Activated naive CD4-positive, alpha-beta T cell treated with anti-CD3 and anti-CD28 coated beads for 36 hours (primary cell): ENCODE measurements at regions of chr14 and their contacts with region 1.

Region 1: GRCh38 chr14:45267071-45267470 is 14.1 kb upstream of the MIS18BP1 start:
- DNase-seq: no peak
- H3K4me3 Mint-ChIP-seq: no peak overlapping the region
- H3K27ac Mint-ChIP-seq: no peak overlapping the region
- H3K4me1 Mint-ChIP-seq: no peaks in the 10 kb centered on the region
- H3K27me3 Mint-ChIP-seq: peaks cover 2% of the 10 kb centered on the region

Region 2: DNA sequence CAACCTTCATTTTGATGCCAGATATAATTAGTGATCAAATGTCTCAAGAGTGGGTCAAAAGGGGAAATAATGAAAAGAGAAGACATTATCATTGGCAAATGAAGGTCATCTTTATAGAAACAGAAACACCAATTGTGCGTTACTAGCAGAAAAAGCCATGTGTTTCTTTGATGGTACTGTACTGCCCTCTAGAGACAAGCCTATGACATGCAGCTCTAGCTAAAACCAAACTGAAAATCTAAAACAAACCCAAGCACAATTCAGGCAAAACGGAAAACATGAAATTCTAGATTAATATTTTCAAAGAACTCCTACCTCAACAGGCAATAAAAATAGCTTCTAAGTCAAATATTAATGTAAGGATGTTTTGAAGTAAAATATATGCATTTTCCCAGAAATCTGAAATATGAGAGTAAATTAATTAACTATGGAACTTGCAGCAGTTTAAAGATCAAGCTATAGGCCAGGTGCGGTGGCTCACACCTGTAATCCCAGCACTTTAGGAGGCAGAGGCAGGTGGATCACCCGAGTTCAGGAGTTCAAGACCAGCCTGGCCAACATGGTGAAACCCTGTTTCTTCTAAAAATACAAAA is 420.7 kb before region 1 on chr14:
- CTCF ChIA-PET with region 1: interaction called, 5 read pairs
- intact Hi-C with region 1: loop called (anchors 2 kb)
- DNase-seq: peak; percentile 20
- H3K4me3 Mint-ChIP-seq: no peak overlapping the region
- H3K27ac Mint-ChIP-seq: no peak overlapping the region
- H3K4me1 Mint-ChIP-seq: no peaks in the 10 kb centered on the region
- H3K27me3 Mint-ChIP-seq: peaks cover 2% of the 10 kb centered on the region

Region 3: GRCh38 chr14:44897045-44897844 is 369.8 kb before region 1 on chr14:
- CTCF ChIA-PET with region 1: no interaction called
- intact Hi-C with region 1: loop called (anchors 5 kb)
- DNase-seq: peak; percentile 99
- H3K4me3 Mint-ChIP-seq: peak overlapping the region; percentile 89
- H3K27ac Mint-ChIP-seq: peak overlapping the region; percentile 83
- H3K4me1 Mint-ChIP-seq: peaks cover 13% of the 10 kb centered on the region
- H3K27me3 Mint-ChIP-seq: no peaks in the 10 kb centered on the region

Region 4: GRCh38 chr14:44912041-44912869 is 354.8 kb before region 1 on chr14:
- CTCF ChIA-PET with region 1: interaction called, 9 read pairs
- intact Hi-C with region 1: loop called (anchors 1 kb)
- DNase-seq: no peak
- H3K4me3 Mint-ChIP-seq: no peak overlapping the region
- H3K27ac Mint-ChIP-seq: no peak overlapping the region
- H3K4me1 Mint-ChIP-seq: peaks cover 9% of the 10 kb centered on the region
- H3K27me3 Mint-ChIP-seq: peaks cover 23% of the 10 kb centered on the region

Region 5: GRCh38 chr14:45134051-45134958 is 132.8 kb before region 1 on chr14 and contains the start of gene FKBP3:
- CTCF ChIA-PET with region 1: interaction called, 7 read pairs
- intact Hi-C with region 1: loop called (anchors 1 kb)
- DNase-seq: peak; percentile 97
- H3K4me3 Mint-ChIP-seq: peak within 1 kb of the TSS; percentile 99
- H3K27ac Mint-ChIP-seq: peak within 1 kb of the TSS; percentile 98
- H3K4me1 Mint-ChIP-seq: peaks cover 37% of the 10 kb centered on the region
- H3K27me3 Mint-ChIP-seq: no peaks in the 10 kb centered on the region
- total RNA-seq, gene FKBP3: 47.6 to 50.8 TPM

Region 6: DNA sequence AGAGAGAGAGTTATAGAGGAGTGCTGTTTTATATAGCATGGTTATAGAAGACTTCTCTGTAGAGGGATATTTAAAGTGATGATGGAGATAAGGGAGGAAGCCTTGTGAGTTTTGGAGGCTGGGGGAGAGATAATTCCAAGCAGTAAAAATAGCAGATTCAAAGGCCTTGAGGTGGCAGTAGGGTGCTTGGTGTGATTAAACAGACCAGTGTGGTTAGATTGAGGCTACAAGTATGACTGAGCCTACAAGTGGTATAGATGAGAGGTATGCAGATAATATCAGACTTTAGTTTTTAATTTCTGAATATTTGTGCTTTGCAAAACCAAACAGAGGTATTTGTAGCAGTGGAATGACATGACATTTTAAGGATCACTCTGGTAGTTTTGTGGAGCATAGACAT is 111.0 kb before region 1 on chr14:
- CTCF ChIA-PET with region 1: interaction called, 3 read pairs
- intact Hi-C with region 1: loop called (anchors 5 kb)
- DNase-seq: no peak
- H3K4me3 Mint-ChIP-seq: no peak overlapping the region
- H3K27ac Mint-ChIP-seq: no peak overlapping the region
- H3K4me1 Mint-ChIP-seq: no peaks in the 10 kb centered on the region
- H3K27me3 Mint-ChIP-seq: no peaks in the 10 kb centered on the region

Region 7: DNA sequence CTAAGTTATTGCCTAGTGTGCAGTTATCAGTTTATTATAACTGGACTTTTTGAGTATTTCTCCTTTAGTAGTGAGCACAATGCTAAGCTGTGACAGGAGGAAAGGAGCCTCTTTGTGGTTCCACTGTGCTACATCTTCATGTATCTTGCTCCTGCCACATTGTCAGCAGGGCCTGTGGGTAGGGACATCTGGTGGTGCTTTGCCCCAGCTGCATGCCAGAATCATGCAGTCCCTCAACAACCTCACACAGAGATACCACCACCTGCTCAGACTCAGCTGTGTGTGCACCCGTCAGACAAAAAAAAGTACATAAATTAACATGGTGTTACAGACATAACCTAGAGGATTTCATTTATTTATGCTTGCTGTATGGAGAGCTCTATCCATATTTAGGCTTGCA is 65.2 kb before region 1 on chr14:
- CTCF ChIA-PET with region 1: interaction called, 3 read pairs
- intact Hi-C with region 1: loop called (anchors 2 kb)
- DNase-seq: peak; percentile 35
- H3K4me3 Mint-ChIP-seq: no peak overlapping the region
- H3K27ac Mint-ChIP-seq: no peak overlapping the region
- H3K4me1 Mint-ChIP-seq: peaks cover 3% of the 10 kb centered on the region
- H3K27me3 Mint-ChIP-seq: no peaks in the 10 kb centered on the region